ENCODE measurements at regions of chr1 and their contacts with region 1.

Region 1: GRCh38 chr1:3564921-3565827 is 46.1 kb downstream of the MEGF6 start:
- DNase-seq: no peak
- ATAC-seq: peak; percentile 19

Region 2: DNA sequence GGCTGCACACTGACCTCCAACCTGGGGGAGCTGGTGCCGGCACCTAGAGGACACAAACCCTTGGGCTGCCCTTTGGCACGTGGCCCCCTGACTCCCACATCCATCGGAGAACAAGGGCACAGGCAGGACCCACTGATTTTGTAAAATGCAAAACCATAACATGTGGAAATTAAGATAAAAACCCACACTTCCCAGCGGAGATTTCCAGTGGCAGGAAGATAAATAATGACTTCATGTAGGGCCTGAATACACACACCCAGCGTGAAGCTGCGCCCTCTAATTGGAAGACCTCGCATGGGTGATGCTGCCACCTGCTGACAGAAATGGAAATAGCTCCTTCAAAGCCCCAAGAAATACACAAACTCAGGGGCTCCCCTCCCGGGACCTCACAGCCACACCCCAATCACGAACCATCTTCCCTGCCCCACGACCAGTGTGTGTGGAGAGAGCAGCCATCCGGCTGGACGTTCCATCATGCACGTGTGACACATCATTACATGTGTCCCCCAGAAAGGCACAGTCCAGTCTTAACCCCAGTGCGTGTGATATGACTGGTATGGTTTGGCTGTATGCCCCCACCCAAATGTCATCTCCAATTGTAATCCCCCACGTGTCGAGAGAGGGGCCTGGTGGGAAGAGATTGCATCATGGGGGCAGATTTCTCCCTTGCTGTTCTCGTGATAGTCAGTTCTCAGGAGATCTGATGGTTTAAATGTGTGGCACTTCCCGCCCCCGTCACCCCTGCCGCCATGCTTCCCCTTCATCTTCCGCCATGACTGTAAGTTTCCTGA is 53.9 kb after region 1 on chr1:
- intact Hi-C with region 1: loop called (anchors 1 kb)
- DNase-seq: peak; percentile 88
- ATAC-seq: peak; percentile 82